ENCODE measurements at regions of chr5 and their contacts with region 1.

Region 1: DNA sequence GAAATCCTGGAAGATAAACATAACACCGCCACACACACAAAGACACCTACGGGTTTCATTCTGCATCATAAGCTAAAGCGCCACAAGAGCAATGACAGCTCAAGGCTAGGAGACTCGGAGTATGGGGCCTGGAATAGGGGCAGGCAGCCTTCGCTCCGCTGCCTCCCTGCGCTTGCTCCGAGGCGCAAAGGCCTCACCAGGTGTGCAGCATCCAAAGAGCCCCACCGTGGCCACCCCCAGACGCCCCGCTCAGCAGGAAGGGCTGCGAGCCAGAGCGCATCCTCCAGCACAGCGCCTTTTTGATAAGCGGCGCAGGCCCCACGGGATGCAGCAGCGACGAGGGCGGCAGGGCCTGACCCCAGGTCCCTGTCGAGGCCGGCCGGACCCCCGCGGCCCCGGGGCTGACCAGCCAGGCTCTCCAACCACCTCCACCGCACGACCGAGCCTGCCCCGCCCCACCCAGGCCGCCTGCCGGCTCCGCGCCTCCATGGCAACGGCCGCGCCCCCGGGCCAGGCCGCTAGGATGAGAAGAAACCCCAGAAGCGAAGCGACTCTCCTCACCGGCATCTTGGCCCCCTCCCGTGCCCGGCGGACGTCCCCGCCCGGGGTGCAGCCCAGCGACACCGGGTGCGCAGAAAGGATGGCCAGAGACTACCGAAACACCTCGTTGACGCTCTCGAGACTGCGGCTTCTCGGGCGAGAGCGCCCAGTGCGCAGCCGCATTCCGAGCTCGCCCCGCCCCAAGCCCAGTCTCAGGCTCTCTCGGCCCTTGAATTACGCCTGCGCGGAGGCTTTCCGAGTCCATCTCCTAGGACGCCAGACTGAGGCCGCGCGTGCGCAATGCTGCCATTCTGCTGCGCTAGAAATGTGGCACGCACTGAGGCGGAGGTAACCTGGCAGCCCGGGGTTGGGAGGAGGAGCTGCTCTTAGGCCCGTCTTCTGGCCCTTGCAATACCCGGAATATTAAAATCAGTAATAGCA is at the start of gene KIF3A:
- DNase-seq: peak; percentile 98
- ATAC-seq: peak; percentile 92
- H3K4me3 Mint-ChIP-seq: peak within 1 kb of the TSS; percentile 90
- H3K27ac Mint-ChIP-seq: peak within 1 kb of the TSS; percentile 87
- H3K4me1 Mint-ChIP-seq: peaks cover 18% of the 10 kb centered on the region
- H3K27me3 Mint-ChIP-seq: peaks cover 5% of the 10 kb centered on the region
- CTCF ChIP-seq: no peak
- total RNA-seq, gene KIF3A: 9.2 and 9.8 TPM in 2 replicates

Region 2: DNA sequence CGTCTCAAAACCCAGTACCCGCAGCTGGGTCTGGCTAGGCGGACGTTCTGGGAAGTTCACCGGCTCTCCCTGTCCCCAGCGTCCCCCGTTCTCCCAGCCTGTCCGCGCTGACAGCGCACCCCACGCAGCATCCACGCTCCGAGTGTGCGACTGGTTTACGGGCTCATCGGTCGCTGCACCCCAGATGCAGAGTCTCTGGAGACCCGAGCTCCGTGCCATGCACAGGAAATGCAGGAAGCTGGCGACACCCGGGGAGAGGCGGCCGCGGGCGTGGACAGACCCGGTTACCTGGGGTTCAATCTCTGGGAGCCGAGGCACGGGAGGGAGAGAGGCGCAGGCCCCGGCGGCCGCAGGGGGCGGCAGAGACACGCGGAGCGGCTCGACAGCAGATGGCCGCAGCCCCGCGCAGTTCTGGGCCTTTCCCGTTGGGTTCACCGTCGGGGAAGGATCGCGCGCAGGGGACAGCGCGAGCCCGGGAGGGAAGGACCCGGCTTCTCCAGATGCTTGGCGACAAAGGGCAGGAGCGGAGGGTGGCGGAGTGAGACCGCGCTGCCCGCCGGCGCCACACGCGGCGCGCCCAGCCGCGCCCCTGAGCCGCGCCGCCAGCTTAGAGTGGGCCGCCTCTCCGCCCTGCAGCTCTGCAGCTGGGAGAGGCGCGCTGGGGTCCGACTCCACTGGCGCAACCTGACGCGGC is 92.7 kb after region 1 on chr5:
- CTCF ChIA-PET with region 1: no interaction called
- POLR2A ChIA-PET with region 1: no interaction called
- intact Hi-C with region 1: no loop called
- DNase-seq: peak; percentile 78
- ATAC-seq: peak; percentile 86
- H3K4me3 Mint-ChIP-seq: peak overlapping the region; percentile 91
- H3K27ac Mint-ChIP-seq: peak overlapping the region; percentile 41
- H3K4me1 Mint-ChIP-seq: peaks cover 14% of the 10 kb centered on the region
- H3K27me3 Mint-ChIP-seq: peaks cover 24% of the 10 kb centered on the region
- CTCF ChIP-seq: peak; percentile 27

Region 3: GRCh38 chr5:132866342-132867045 is 129.4 kb after region 1 on chr5 and contains the starts of genes GDF9 and UQCRQ:
- CTCF ChIA-PET with region 1: no interaction called
- POLR2A ChIA-PET with region 1: interaction called, 3 read pairs
- intact Hi-C with region 1: loop called (anchors 1 kb)
- DNase-seq: peak; percentile 77
- ATAC-seq: peak; percentile 98
- H3K4me3 Mint-ChIP-seq: peak within 1 kb of the TSS; percentile 99
- H3K27ac Mint-ChIP-seq: peak within 1 kb of the TSS; percentile 98
- H3K4me1 Mint-ChIP-seq: peaks cover 25% of the 10 kb centered on the region
- H3K27me3 Mint-ChIP-seq: no peaks in the 10 kb centered on the region
- CTCF ChIP-seq: no peak
- total RNA-seq, gene GDF9: 0.29 and 0.39 TPM in 2 replicates
- total RNA-seq, gene UQCRQ: 197 and 218 TPM in 2 replicates

Measured in activated B cell treated with CpG ODN at 0.5 μM for 24 hours (primary cell).